ENCODE measurements at regions of chr10 and their contacts with region 1.

Region 1: DNA sequence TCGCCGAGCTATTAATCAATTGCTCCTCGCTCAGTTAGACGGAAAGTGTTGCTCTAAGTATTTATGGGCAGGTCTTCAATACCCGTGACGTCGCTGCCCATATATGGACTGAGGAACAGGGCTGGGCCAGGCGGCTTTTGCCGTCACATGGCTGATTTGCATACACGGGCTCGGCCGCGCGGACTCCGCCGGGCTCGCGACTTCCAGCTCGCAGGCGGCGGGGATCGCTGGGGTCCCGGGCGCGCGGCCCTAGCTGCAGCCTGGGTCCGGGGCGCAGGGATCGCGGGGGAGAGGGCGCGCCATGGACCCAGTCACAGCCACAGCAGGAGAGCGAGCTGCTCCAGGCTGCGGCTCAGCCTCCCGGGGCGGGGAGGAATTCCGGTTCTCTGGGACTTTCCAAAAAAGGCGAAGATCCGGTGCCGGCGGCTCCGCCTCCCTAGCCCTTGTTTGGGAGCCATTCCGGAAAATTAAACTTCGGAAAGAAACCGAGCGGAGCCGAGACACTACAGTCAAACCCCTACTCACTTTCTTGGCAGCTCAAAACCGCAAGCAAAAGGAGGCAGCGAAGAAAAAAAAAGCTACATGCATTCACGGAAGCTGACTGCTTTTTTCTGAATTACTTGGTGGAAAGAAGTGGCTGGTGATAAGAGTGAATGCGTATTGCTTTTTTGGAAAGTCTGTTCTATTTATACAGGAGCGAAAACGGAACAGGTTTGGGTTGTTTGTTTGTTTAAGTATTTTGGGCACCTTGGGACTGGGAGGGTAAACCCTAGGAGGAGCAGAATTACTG is at the start of gene EGR2:
- H3K4me3 Mint-ChIP-seq: peak within 1 kb of the TSS; percentile 98
- H3K27ac Mint-ChIP-seq: peak within 1 kb of the TSS; percentile 98
- H3K4me1 Mint-ChIP-seq: peaks cover 57% of the 10 kb centered on the region
- H3K27me3 Mint-ChIP-seq: peaks cover 18% of the 10 kb centered on the region

Region 2: DNA sequence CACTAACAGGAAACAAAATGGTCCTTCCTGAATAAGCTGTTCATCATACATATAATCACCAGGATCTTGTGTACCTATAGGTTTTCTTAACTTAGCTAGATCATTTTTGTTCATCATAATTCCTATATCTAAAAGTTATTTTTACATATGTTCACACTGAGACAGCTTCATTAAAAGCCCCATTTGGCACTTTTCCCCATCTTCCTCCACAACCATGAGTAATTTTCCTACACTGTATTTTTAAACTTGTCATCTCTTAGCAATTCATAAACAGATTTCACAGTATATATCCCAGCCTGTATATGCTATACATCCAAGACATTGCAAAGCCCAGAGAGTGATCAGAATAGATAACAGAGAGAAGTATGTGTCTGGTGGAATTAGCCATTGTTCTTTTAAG is 414.0 kb before region 1 on chr10:
- intact Hi-C with region 1: no loop called
- H3K4me3 Mint-ChIP-seq: no peak overlapping the region
- H3K27ac Mint-ChIP-seq: no peak overlapping the region
- H3K4me1 Mint-ChIP-seq: peaks cover 14% of the 10 kb centered on the region
- H3K27me3 Mint-ChIP-seq: peaks cover 2% of the 10 kb centered on the region

Region 3: GRCh38 chr10:62594093-62594520 is 222.4 kb before region 1 on chr10:
- intact Hi-C with region 1: loop called (anchors 5 kb)
- H3K4me3 Mint-ChIP-seq: no peak overlapping the region
- H3K27ac Mint-ChIP-seq: peak overlapping the region; percentile 24
- H3K4me1 Mint-ChIP-seq: peaks cover 22% of the 10 kb centered on the region
- H3K27me3 Mint-ChIP-seq: no peaks in the 10 kb centered on the region

Region 4: GRCh38 chr10:62804356-62805230 is 11.9 kb before region 1 on chr10 and contains the start of gene ADO:
- intact Hi-C with region 1: loop called (anchors 1 kb)
- H3K4me3 Mint-ChIP-seq: peak within 1 kb of the TSS; percentile 93
- H3K27ac Mint-ChIP-seq: peak within 1 kb of the TSS; percentile 100
- H3K4me1 Mint-ChIP-seq: peaks cover 54% of the 10 kb centered on the region
- H3K27me3 Mint-ChIP-seq: peaks cover 5% of the 10 kb centered on the region

Region 5: DNA sequence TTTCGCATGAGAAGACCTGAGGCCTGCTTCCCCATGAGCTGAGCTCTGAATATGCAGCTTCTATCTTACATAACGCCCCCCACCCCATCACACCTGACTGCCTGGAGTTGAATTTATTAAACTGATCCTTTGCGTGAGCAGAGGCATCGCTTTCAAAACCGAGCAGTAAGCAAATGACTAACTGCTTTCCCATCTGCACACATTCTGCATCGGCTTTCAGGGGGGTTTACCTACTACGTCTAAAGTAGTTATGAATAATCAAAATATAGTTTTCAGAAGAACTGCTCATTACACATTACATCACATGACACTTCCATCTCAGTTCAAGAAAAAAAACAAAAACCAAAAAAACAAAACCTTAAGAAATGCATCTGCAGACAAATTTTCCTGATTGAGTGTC is 54.3 kb after region 1 on chr10:
- intact Hi-C with region 1: no loop called
- H3K4me3 Mint-ChIP-seq: no peak overlapping the region
- H3K27ac Mint-ChIP-seq: no peak overlapping the region
- H3K4me1 Mint-ChIP-seq: no peaks in the 10 kb centered on the region
- H3K27me3 Mint-ChIP-seq: peaks cover 14% of the 10 kb centered on the region

Region 6: DNA sequence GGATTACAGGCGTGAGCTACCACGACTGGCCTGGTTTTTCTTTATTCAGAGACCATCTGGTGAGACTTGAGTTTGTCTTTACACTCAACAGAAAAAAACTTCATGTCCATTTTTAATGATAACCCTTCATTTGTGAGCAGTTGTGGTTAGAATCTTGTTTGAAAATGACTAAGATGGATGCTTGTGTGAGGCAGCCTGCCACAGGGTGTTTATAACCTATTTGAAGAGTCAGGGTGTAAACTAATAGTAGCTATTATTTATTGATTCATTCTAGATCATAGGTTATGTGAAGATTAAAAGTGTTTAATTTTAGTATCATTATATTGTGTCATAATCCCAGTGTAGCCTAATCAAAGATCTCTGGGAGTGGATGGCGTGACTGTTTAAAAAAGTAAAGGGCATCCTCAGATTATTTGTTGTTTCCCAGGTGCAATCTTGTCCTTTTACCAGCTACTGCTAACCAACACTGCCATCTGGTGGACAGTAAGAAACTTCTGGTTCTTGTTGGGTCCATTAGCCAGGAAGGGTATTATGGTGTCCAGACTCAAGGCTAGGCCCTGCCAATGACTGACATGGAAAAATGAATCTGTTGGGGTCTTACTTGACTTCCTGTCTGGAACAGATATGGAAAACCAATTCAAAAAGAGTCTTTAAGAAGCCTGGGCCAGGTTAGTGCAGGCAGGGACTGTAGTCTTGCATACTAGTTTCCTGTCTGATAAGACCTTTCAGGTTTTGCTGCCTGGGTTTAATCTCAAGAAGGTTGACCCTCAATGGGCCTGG is 341.5 kb after region 1 on chr10:
- intact Hi-C with region 1: loop called (anchors 5 kb)
- H3K4me3 Mint-ChIP-seq: no peak overlapping the region
- H3K27ac Mint-ChIP-seq: no peak overlapping the region
- H3K4me1 Mint-ChIP-seq: peaks cover 21% of the 10 kb centered on the region
- H3K27me3 Mint-ChIP-seq: no peaks in the 10 kb centered on the region

Measured in dendritic cell treated with granulocyte-macrophage colony-stimulating factor and Interleukin-4, amounts not matched to agents 40 ng/mL and 50 ng/mL, for 4 days (primary cell).